ENCODE measurements at regions of chr19 and their contacts with region 1.

Region 1: DNA sequence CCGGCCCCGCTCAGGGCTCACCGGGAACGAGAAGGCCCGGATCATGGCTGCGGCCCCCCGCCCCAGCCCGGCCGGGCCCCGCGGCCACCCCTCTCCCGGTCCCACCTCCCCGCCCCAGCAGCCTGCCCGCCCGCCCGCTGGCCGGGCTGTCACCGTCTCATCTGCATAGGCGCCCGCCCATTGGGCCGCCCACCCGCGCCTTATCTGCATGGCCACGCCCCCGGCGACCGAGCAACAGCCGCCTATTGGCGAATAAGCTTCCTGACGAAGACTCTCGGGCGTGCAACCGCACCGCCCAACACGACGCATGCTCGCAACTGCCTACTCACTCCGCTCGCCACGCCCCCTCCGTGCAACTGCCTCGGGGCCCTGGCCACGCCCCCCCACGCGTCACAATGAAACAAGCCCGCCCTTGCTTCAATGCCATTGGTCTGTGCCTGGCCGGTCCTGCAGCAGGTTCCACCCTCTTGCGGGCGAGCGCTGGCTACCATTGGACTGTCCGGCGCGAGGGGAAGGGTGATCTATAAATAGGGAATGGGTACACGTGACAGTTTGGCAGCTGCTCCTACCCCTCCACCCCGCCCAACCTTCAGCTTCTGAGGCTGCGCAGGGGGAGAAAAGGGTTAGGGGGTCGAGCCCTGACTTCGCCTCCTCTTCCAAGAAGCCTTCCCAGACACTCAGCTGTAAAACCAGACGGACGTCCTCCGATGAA is at the start of gene DACT3:
- DNase-seq: peak; percentile 99
- CTCF ChIP-seq: no peak

Region 2: GRCh38 chr19:46537136-46538097 is 123.8 kb before region 1 on chr19:
- CTCF ChIA-PET with region 1: interaction called, 13 read pairs
- POLR2A ChIA-PET with region 1: no interaction called
- DNase-seq: peak; percentile 58
- CTCF ChIP-seq: peak; percentile 79

Region 3: GRCh38 chr19:46600384-46601317 is 60.5 kb before region 1 on chr19:
- CTCF ChIA-PET with region 1: interaction called, 287 read pairs
- POLR2A ChIA-PET with region 1: no interaction called
- DNase-seq: peak; percentile 94
- CTCF ChIP-seq: no peak

Region 4: DNA sequence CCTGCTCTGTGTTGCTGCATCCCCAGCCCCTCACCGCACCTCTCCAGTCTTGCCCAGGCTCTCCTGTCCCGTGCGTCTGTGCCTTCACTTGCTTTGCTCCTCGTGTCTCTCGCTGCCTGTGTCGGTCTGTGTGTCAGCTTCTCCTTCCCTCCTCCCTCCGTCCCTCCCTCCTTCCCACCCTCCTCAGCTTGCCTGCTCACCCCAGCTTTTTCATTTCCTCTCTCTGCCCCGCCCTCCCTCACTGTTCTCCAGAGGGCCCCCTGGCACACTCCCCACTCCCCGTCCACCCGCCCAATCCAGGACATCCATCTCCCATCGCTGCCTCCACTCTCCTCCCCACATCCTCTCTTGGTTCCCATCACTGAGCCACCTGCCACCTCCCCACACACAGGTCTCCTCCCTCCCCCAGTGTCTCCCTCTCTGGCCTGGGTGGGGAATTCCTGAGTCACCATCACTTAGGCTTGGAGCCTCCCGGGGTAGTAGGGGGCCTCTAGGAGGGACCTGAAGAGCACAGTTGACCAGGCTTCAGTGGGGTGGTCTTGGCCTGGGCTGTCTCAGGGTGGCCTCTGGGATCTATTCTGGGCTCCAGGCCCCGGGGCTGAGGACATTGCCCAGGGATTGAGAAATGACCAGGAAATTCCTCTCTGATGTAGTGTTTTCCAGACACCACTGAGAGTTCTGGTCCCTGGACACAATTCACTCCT is 36.1 kb before region 1 on chr19 and contains the start of gene PTGIR:
- CTCF ChIA-PET with region 1: interaction called, 287 read pairs
- POLR2A ChIA-PET with region 1: no interaction called
- DNase-seq: no peak
- CTCF ChIP-seq: no peak

Region 5: GRCh38 chr19:46678110-46678732 is 17.0 kb after region 1 on chr19:
- CTCF ChIA-PET with region 1: interaction called, 30 read pairs
- POLR2A ChIA-PET with region 1: no interaction called
- DNase-seq: peak; percentile 73
- CTCF ChIP-seq: no peak

Region 6: GRCh38 chr19:46803555-46803954 is 142.4 kb after region 1 on chr19:
- CTCF ChIA-PET with region 1: no interaction called
- POLR2A ChIA-PET with region 1: no interaction called
- DNase-seq: no peak
- CTCF ChIP-seq: no peak